OCI-LY7 (cell line): ENCODE measurements at regions of chr1 and their contacts with region 1.

Region 1: DNA sequence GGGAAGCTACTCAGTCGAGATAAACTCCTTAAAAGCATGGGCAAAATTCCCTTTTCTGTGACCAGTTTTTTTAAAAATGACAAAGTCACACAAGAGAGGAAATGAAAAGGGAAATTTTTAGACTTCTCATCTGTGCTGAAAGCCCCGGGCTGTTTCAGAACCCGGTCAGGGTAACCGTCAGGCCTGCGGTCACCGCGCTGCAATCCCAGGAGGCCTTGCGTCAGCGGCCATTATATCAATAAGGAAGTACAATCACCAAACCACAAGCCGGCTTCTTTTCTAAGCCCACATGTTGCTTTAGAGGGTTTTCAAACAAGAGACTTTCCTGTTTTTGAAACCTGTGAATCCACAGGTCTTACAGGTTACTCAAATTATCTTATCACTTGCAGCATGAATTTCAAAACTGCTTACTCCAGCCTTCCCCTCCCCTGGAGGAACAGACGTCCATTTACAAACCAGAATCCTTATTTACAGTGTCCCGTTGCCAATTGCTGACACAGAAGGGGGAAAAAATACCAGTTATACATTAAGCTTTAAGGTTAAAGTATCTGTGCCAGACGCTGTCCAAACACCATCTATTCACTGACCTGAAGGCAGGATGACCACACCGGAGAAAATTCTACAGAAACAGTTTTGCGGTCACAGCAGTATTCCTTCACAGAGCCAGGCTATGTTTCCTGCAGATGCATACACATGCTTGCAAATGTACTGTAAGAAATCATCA is 165.3 kb downstream of the TOMM20 start:
- DNase-seq: peak; percentile 97
- H3K4me3 ChIP-seq: peak overlapping the region; percentile 56
- H3K27ac ChIP-seq: peak overlapping the region; percentile 97
- H3K4me1 ChIP-seq: peaks cover 74% of the 10 kb centered on the region
- CTCF ChIP-seq: no peak

Region 2: GRCh38 chr1:234373064-234373958 is 590.0 kb before region 1 on chr1 and contains the start of gene COA6:
- CTCF ChIA-PET with region 1: no interaction called
- POLR2A ChIA-PET with region 1: no interaction called
- intact Hi-C with region 1: no loop called
- DNase-seq: peak; percentile 99
- H3K4me3 ChIP-seq: peak within 1 kb of the TSS; percentile 92
- H3K27ac ChIP-seq: peak within 1 kb of the TSS; percentile 95
- H3K4me1 ChIP-seq: peaks cover 35% of the 10 kb centered on the region
- CTCF ChIP-seq: peak; percentile 31; the same call in 1 of the 2 replicates
- total RNA-seq, gene COA6: 40.1 and 45.5 TPM in 2 replicates

Region 3: DNA sequence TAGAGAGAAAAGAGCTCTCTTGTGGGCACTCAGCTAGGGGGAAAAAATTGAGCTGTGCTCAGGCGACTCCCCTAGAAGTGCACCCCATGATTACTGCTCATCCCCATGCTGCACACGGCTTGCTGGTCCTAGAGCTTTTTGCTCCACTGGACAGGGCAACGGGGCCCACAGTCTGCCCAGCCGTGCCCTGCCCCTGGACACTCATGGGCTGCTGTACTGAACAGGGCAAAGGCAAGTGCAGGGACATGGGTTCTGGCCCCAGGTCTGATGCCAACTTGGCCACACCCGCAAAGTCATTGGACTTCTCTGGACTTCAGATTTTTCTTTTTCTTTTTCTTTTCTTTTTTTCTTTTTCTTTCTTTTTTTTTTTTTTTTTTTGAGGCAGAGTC is 441.5 kb before region 1 on chr1:
- CTCF ChIA-PET with region 1: no interaction called
- POLR2A ChIA-PET with region 1: interaction called, 4 read pairs
- intact Hi-C with region 1: loop called (anchors 1 kb)
- DNase-seq: no peak
- H3K4me3 ChIP-seq: no peak overlapping the region
- H3K27ac ChIP-seq: peak overlapping the region; percentile 91
- H3K4me1 ChIP-seq: peaks cover 86% of the 10 kb centered on the region
- CTCF ChIP-seq: no peak

Region 4: DNA sequence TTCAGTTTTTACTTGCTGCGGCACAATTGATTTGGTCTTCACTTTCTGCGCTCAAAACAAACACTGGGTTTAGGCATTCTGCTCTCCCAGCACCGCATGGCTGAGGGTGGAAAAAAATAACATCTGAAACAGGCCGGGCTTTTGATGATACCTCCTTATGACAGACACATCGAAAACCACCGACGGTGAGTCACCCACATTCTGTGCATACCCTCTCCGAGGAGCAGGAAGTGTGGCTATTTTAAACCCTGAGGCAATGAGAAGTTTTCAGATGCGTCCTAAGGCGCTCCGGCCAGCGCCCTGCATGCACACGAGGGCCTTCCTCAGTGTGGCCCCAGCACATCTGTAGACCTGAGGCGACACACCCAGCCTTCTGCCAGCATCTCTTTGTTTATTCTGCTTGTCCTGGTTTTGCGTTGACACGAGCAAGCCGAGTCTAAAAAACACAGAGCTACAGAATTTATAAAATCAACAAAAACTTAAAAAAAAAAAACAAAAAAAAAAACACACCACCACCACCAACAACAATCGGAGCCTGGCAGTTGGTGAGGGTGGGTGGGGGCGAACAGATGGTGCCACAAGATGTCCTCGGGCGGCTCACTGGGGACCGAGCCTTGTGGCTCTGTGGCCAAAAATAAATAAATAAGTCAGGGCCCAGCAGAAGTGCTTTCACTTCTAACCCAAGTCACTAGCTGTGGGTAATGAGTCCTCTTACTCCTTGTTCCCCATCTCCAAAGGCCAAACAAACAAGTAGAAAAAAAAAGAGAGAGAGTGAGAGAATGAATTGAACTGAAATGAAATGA is 190.8 kb before region 1 on chr1:
- CTCF ChIA-PET with region 1: no interaction called
- POLR2A ChIA-PET with region 1: interaction called, 3 read pairs
- intact Hi-C with region 1: loop called (anchors 2 kb)
- DNase-seq: peak; percentile 88
- H3K4me3 ChIP-seq: peak overlapping the region; percentile 39
- H3K27ac ChIP-seq: peak overlapping the region; percentile 66
- H3K4me1 ChIP-seq: peaks cover 33% of the 10 kb centered on the region
- CTCF ChIP-seq: no peak

Region 5: DNA sequence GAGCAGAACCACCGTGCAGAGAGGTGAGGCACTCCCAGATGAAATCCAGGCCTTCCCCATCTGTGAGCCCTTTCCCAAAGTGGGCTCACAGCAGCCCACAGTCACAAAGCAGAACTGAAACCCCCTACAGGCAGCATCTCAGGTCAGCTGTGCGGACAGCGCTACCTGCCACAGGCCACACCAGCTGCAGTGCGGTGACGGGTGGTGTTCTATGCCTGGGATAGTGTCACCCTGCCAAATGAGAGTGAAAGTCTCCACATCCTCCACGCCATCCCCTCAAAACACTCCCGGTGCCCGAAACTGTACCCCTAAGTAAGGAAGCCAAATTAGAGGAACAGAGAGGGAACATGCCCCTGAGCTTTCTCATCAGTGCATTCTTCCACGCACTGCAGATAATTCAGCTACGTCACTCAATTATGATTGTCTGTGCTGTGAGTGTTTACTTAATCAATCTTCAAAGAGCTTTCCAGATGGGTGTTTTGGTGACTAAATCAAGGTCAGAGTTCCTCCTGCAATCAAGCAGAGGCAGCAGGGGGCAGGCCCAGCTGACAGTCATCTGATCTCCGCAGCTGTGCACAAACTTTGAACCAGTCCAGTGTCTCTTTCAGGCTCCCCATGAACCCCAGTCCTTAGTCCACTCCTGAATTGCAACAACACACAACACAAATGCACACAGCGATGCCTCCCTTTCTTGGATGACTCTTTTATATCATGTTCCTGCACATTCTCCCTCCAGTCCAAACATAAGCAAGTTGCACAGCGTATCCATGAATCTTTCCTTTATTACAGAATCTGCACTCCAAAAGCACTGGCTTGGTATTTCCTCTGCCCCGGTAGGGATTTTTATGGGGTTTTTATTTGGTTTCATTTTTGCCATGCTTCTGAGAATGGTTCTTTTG is 15.3 kb after region 1 on chr1:
- CTCF ChIA-PET with region 1: interaction called, 11 read pairs
- POLR2A ChIA-PET with region 1: interaction called, 120 read pairs
- intact Hi-C with region 1: loop called (anchors 1 kb)
- DNase-seq: peak; percentile 94
- H3K4me3 ChIP-seq: peak overlapping the region; percentile 56
- H3K27ac ChIP-seq: peak overlapping the region; percentile 92
- H3K4me1 ChIP-seq: peaks cover 68% of the 10 kb centered on the region
- CTCF ChIP-seq: peak; percentile 63

Region 6: DNA sequence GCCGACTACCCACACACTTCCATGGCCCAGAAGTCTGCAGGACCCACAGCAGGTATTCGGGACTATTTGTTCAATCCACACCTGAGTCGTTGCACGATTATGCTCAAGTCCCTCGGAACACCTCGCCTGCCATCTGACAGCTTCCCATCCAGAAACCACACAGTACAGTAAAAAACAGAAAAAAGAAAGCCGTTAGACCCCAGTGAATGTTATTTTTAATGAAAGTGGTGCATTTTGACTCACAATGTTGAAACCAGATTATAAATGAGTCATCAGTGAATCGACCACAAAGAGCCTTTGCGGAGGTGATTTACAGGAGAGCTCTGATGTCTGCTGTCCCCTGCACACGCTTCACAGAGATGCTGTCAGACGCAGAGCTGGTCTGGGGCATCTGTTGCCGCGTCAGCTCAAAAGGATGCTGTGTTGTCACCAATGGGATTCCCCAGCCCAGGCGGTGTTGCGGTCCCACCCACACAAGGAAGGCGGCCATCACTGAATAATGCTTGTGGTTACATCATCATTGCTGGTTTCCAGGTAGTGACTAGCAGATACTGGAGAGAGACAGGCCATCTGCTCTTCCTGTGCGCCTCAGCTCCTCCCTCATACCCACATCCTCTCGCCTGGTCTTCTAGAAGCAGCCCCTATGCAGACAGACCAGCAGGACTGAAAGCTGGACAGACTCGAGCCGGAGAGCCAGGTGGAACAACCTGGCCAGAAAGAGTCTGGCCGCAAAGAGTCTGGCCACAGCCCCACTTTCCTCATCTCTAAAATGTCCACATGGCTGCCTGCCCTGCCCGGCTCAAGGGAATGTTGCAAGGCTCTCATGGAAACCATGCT is 48.5 kb after region 1 on chr1:
- CTCF ChIA-PET with region 1: interaction called, 3 read pairs
- POLR2A ChIA-PET with region 1: interaction called, 9 read pairs
- intact Hi-C with region 1: loop called (anchors 1 kb)
- DNase-seq: peak; percentile 95
- H3K4me3 ChIP-seq: peak overlapping the region; percentile 64
- H3K27ac ChIP-seq: peak overlapping the region; percentile 87
- H3K4me1 ChIP-seq: peaks cover 91% of the 10 kb centered on the region
- CTCF ChIP-seq: no peak

Region 7: GRCh38 chr1:235100194-235100772 is 136.9 kb after region 1 on chr1:
- CTCF ChIA-PET with region 1: no interaction called
- POLR2A ChIA-PET with region 1: no interaction called
- intact Hi-C with region 1: no loop called
- DNase-seq: peak; percentile 79
- H3K4me3 ChIP-seq: peak overlapping the region; percentile 6
- H3K27ac ChIP-seq: peak overlapping the region; percentile 7
- H3K4me1 ChIP-seq: peaks cover 29% of the 10 kb centered on the region
- CTCF ChIP-seq: no peak